Activated CD4-positive, alpha-beta T cell treated with anti-CD3 and anti-CD28 coated beads for 36 hours (primary cell): ENCODE measurements at regions of chr16 and their contacts with region 1.

Region 1: GRCh38 chr16:4220358-4220757 is 21.5 kb downstream of the SRL start:
- DNase-seq: no peak
- ATAC-seq: no peak
- H3K4me3 Mint-ChIP-seq: no peak overlapping the region
- H3K27ac Mint-ChIP-seq: no peak overlapping the region
- H3K4me1 Mint-ChIP-seq: no peaks in the 10 kb centered on the region
- H3K27me3 Mint-ChIP-seq: peaks cover 2% of the 10 kb centered on the region

Region 2: GRCh38 chr16:4032768-4033167 is 187.6 kb before region 1 on chr16:
- CTCF ChIA-PET with region 1: no interaction called
- POLR2A ChIA-PET with region 1: interaction called, 12 read pairs
- intact Hi-C with region 1: no loop called
- DNase-seq: peak; percentile 42
- ATAC-seq: no peak
- H3K4me3 Mint-ChIP-seq: no peak overlapping the region
- H3K27ac Mint-ChIP-seq: no peak overlapping the region
- H3K4me1 Mint-ChIP-seq: peaks cover 4% of the 10 kb centered on the region
- H3K27me3 Mint-ChIP-seq: no peaks in the 10 kb centered on the region

Region 3: GRCh38 chr16:4506450-4506849 is 286.1 kb after region 1 on chr16:
- CTCF ChIA-PET with region 1: no interaction called
- POLR2A ChIA-PET with region 1: no interaction called
- intact Hi-C with region 1: no loop called
- DNase-seq: peak; percentile 75
- ATAC-seq: peak; percentile 72
- H3K4me3 Mint-ChIP-seq: no peak overlapping the region
- H3K27ac Mint-ChIP-seq: peak overlapping the region; percentile 81
- H3K4me1 Mint-ChIP-seq: peaks cover 48% of the 10 kb centered on the region
- H3K27me3 Mint-ChIP-seq: no peaks in the 10 kb centered on the region